ENCODE measurements at regions of chr22 and their contacts with region 1.

Region 1: GRCh38 chr22:40856513-40857308 is at the starts of genes ST13 and XPNPEP3:
- DNase-seq: peak; percentile 95
- H3K4me3 ChIP-seq: peak within 1 kb of the TSS; percentile 90 to 98 (median 92)
- H3K27ac ChIP-seq: peak within 1 kb of the TSS; percentile 98
- H3K4me1 ChIP-seq: peaks cover 38% of the 10 kb centered on the region
- H3K27me3 ChIP-seq: no peaks in the 10 kb centered on the region
- CTCF ChIP-seq: peak in 1 of 2 donors; percentile 19
- total RNA-seq, gene ST13: 163 to 206 TPM
- total RNA-seq, gene XPNPEP3: 14.0 to 16.8 TPM

Region 2: DNA sequence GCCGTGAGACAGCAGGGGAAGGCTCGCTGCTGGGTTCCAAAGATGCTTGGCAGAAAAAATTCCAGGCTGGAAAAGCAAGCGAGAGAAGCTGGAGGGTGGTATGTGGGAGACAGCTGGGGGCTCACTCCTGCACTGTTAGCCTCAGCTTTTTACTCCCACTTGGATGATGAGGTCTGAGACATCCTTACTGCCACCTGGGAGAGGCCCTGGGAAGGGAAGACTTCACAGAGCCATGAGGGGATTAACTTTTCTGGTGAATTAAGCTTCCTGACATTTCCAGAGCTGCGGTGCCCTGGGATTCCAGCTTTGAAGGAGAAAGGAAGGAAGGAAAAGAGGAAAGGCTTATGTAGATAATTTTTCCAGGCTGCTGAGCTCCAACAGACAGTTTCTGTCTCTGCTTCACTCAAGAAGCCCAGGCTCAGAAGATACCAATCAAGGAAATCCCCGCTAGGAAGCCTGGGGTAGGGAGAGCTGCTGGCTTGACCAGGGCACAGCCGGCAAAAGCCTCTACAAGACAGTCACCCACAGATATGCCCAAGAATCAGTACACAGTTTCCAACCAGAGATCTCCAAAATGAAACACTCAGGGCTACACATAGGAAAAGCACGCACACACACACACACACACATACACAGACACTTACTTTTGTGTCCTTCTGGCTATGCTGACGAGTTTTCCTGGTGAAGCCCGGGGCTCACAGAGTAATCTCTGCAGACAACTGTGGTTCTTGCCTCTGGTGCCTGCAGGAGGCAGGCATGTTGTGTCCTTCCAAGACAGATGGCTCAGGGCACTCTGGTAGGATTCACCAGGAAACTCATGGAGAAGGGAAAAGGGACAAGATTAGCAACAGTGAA is 176.5 kb before region 1 on chr22:
- CTCF ChIA-PET with region 1: no interaction called
- dilution Hi-C with region 1: no loop called
- in situ Hi-C with region 1: no loop called
- intact Hi-C with region 1: loop called (anchors 1 kb)
- DNase-seq: no peak
- H3K4me3 ChIP-seq: no peak overlapping the region
- H3K27ac ChIP-seq: no peak overlapping the region
- H3K4me1 ChIP-seq: peaks cover 27% of the 10 kb centered on the region
- H3K27me3 ChIP-seq: no peaks in the 10 kb centered on the region
- CTCF ChIP-seq: peak in 1 of 2 donors; percentile 10

Region 3: DNA sequence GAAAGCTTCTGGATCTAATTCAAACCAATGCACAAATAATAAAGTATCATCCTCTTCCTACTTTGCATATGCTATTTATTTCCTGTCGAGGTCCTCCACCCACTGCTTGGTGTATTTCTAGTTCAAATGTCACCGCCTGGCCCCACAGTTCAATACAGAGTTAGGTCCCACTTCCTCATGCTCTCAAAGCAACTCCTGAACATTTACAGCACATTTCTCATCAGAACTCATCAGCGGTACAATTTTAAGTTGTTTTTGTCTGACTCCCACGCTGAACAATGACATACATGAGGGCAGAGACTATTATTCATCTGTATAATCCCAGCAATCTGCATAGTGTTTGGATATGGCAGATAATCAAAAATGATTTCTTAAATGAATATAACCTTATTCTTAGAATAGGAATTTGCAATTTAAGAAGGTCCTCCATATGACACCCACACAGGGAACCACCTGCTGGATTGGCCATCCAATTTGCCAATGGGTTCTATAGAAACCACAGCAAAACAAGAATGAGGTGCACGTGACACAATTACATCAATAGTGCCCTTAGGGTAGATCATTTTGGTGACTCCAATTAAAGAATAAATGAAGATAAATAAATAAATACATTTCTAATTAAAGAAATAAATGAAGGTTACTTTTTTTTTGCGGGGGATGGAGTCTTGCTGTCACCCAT is 91.8 kb before region 1 on chr22:
- CTCF ChIA-PET with region 1: no interaction called
- dilution Hi-C with region 1: no loop called
- in situ Hi-C with region 1: no loop called
- intact Hi-C with region 1: no loop called
- DNase-seq: no peak
- H3K4me3 ChIP-seq: no peak overlapping the region
- H3K27ac ChIP-seq: no peak overlapping the region
- H3K4me1 ChIP-seq: no peaks in the 10 kb centered on the region
- H3K27me3 ChIP-seq: no peaks in the 10 kb centered on the region
- CTCF ChIP-seq: no peak

Region 4: DNA sequence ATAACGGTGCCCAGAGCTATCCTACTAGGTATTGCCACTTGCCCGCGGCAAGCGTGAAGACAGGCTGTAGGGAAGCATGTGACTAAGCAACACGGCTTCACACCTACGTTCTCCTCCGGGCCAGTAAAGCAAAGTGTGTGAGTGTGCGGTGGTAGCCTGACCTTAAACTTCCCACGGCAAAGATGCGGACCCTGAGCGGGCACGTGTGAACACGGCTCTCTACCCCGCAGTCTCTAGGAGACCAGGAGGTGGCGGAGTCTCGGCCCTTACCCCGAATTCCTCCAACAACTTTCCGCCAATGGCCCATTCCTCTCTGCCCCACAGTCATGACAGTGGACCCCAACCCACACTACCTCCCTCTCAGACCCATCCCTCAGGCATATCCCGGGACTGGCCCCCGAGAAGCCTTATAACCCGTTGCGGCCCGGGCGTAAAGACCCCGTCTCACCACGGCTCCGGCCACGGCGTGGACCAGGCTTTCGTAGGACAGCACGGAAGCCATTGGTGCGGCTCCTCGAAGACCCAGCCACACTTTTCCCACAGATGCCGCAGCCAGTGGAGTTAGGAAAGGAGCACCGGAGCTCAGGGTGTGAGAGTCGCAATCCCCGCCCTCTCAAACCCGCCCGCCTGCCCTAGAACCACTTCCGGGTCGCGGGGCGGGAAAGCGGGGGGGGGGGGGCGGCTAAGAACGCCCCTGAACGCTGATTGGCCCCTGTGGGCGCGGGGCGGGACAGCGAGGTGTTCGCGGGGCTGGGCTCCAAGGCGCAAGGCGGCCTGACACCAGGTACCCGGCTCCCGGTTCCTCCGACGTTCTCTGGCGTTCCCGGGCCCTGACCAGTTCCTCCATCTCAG is 37.7 kb before region 1 on chr22 and contains the start of gene SLC25A17:
- CTCF ChIA-PET with region 1: interaction called, 6 read pairs
- dilution Hi-C with region 1: no loop called
- in situ Hi-C with region 1: no loop called
- intact Hi-C with region 1: loop called (anchors 1 kb)
- DNase-seq: peak; percentile 83
- H3K4me3 ChIP-seq: peak within 1 kb of the TSS; percentile 76 to 90 (median 84)
- H3K27ac ChIP-seq: peak within 1 kb of the TSS; percentile 56
- H3K4me1 ChIP-seq: peaks cover 17% of the 10 kb centered on the region
- H3K27me3 ChIP-seq: no peaks in the 10 kb centered on the region
- CTCF ChIP-seq: peak in 1 of 2 donors; percentile 47
- total RNA-seq, gene SLC25A17: 24.8 to 31.6 TPM

Region 5: DNA sequence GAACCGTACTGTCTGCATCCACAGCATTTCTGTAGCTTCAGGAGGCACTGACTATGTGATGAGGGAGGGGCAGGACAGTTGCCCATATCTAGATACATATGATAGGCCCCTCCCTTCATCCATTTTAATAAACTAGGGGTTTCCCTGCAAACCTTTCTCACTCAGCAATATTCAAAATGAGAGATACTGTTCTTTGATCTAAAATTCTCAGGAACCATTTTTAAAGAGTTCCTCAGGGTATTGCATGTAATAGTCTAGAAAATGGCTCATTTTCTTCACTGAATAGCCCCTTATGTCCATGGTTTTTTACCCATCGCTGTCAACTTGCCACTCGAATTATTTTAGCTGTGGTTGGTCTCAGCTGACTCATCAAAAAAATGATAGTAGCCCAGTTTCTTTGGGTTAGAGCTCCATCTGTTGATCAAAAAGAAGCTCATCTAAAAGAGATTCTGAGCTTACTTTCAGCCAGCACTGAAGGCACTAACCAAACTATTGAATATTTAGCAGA is 42.2 kb after region 1 on chr22:
- CTCF ChIA-PET with region 1: no interaction called
- dilution Hi-C with region 1: no loop called
- in situ Hi-C with region 1: no loop called
- intact Hi-C with region 1: loop called (anchors 5 kb)
- DNase-seq: peak; percentile 52
- H3K4me3 ChIP-seq: no peak overlapping the region
- H3K27ac ChIP-seq: no peak overlapping the region
- H3K4me1 ChIP-seq: peaks cover 2% of the 10 kb centered on the region
- H3K27me3 ChIP-seq: no peaks in the 10 kb centered on the region
- CTCF ChIP-seq: peak; percentile 56 to 59

Region 6: GRCh38 chr22:41280066-41280465 is 423.4 kb after region 1 on chr22:
- CTCF ChIA-PET with region 1: no interaction called
- dilution Hi-C with region 1: no loop called
- in situ Hi-C with region 1: no loop called
- intact Hi-C with region 1: loop called (anchors 2 kb)
- DNase-seq: peak; percentile 99
- H3K4me3 ChIP-seq: no peak overlapping the region
- H3K27ac ChIP-seq: no peak overlapping the region
- H3K4me1 ChIP-seq: peaks cover 40% of the 10 kb centered on the region
- H3K27me3 ChIP-seq: no peaks in the 10 kb centered on the region
- CTCF ChIP-seq: no peak